K562 (cell line): ENCODE measurements at regions of chr14 and their contacts with region 1.

Region 1: GRCh38 chr14:96917442-96917963 is 120.3 kb downstream of the VRK1 start:
- DNase-seq: peak; percentile 91 to 94 (median 92)
- ATAC-seq: peak; percentile 89
- H3K4me3 ChIP-seq: no peak overlapping the region
- H3K27ac ChIP-seq: peak overlapping the region; percentile 73
- H3K4me1 ChIP-seq: peaks cover 6 to 39% of the 10 kb centered on the region in 2 experiments; a peak in 4 of 5 replicates
- H3K27me3 ChIP-seq: no peaks in the 10 kb centered on the region
- CTCF ChIP-seq: no peak; a peak in 1 of 6 replicates
- EP300 ChIP-seq: peak; percentile 96
- POLR2A ChIP-seq: no peak
- RAD21 ChIP-seq: no peak

Region 2: DNA sequence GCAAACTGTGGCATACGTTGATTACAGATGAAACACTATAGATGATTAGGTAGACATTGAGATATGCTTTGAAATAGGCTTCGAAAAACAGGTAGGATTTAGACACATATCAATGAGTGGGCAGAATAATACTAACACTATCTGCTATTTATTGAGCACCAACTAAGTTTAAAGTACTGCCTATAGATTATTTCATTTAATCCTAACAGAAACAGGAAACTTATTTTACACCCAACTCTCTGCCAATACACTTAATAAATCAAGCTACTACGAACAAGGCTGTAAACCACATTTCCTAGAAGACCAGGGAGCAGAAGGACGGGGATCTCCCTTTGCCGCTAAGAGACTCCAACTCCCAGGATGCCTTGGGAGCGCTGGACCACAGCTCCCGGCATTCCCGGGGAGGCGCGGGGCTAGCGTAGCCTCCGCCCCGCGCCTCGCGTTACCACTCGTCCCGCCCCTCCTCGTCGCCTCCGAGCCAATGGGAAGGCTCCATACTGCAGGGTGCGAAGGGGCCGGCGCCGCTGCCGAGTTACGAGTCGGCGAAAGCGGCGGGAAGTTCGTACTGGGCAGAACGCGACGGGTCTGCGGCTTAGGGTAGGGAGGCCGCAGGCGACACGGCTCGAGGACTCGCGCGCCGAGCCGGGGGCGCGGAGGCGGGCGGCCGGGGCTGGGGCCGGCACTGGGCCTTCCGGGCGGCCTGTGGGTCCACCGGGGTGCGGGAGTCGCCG is 120.5 kb before region 1 on chr14 and contains the start of gene VRK1:
- CTCF ChIA-PET with region 1: no interaction called
- POLR2A ChIA-PET with region 1: interaction called, 3 read pairs
- in situ Hi-C with region 1: no loop called
- intact Hi-C with region 1: loop called (anchors 1 kb)
- DNase-seq: peak; percentile 95 to 97 (median 96)
- ATAC-seq: peak; percentile 97
- H3K4me3 ChIP-seq: peak within 1 kb of the TSS; percentile 70
- H3K27ac ChIP-seq: peak within 1 kb of the TSS; percentile 91
- H3K4me1 ChIP-seq: peaks cover 10 to 14% of the 10 kb centered on the region in 2 experiments; a peak in 3 of 5 replicates
- H3K27me3 ChIP-seq: no peaks in the 10 kb centered on the region; a peak in 1 of 5 replicates
- CTCF ChIP-seq: no peak
- EP300 ChIP-seq: no peak
- POLR2A ChIP-seq: peak; percentile 75
- RAD21 ChIP-seq: no peak
- polyA plus RNA-seq, gene VRK1: 177 TPM

Region 3: DNA sequence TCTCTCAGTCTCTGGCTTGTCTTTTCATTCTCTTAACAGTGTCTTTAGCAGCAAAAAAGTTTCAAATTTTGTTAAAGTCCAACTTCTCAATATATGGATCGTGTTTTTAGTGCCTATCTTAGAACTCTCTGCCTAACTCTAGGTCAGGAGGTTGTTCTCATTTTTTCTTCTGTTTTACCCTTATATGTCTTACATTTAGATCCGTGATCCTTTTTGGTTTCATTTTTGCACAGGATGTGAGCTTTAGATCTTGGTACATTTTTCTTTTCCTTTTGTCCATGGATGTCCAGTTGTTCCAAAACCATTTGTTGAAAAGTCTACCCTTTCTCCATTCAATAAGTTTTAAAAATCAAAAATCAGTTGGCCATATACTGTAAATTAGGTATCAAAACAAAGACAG is 113.5 kb before region 1 on chr14:
- CTCF ChIA-PET with region 1: no interaction called
- POLR2A ChIA-PET with region 1: no interaction called
- in situ Hi-C with region 1: no loop called
- intact Hi-C with region 1: loop called (anchors 2 kb)
- DNase-seq: no peak
- ATAC-seq: no peak
- H3K4me3 ChIP-seq: no peak overlapping the region
- H3K27ac ChIP-seq: no peak overlapping the region
- H3K4me1 ChIP-seq: peaks cover 7 to 50% of the 10 kb centered on the region in 2 experiments
- H3K27me3 ChIP-seq: no peaks in the 10 kb centered on the region
- CTCF ChIP-seq: no peak
- EP300 ChIP-seq: no peak
- POLR2A ChIP-seq: no peak
- RAD21 ChIP-seq: no peak

Region 4: GRCh38 chr14:97056086-97056485 is 138.6 kb after region 1 on chr14:
- CTCF ChIA-PET with region 1: no interaction called
- POLR2A ChIA-PET with region 1: no interaction called
- in situ Hi-C with region 1: no loop called
- intact Hi-C with region 1: no loop called
- DNase-seq: no peak
- ATAC-seq: no peak
- H3K4me3 ChIP-seq: no peak overlapping the region
- H3K27ac ChIP-seq: no peak overlapping the region
- H3K4me1 ChIP-seq: no peaks in the 10 kb centered on the region
- H3K27me3 ChIP-seq: peaks cover 6 to 47% of the 10 kb centered on the region in 2 experiments; a peak in 4 of 5 replicates
- CTCF ChIP-seq: peak; percentile 7 to 26 (median 12); a peak in 2 of 6 replicates
- EP300 ChIP-seq: no peak
- POLR2A ChIP-seq: no peak
- RAD21 ChIP-seq: 0 out of 4 replicates have a peak, but pooled peaks of 1 of the 2 experiments have one; percentile 28